ENCODE measurements at regions of chr9 and their contacts with region 1.

Region 1: GRCh38 chr9:90112788-90113187 is 508.0 kb downstream of the GADD45G start:
- DNase-seq: no peak
- H3K4me3 ChIP-seq: no peak overlapping the region
- CTCF ChIP-seq: no peak
- POLR2A ChIP-seq: no peak

Region 2: DNA sequence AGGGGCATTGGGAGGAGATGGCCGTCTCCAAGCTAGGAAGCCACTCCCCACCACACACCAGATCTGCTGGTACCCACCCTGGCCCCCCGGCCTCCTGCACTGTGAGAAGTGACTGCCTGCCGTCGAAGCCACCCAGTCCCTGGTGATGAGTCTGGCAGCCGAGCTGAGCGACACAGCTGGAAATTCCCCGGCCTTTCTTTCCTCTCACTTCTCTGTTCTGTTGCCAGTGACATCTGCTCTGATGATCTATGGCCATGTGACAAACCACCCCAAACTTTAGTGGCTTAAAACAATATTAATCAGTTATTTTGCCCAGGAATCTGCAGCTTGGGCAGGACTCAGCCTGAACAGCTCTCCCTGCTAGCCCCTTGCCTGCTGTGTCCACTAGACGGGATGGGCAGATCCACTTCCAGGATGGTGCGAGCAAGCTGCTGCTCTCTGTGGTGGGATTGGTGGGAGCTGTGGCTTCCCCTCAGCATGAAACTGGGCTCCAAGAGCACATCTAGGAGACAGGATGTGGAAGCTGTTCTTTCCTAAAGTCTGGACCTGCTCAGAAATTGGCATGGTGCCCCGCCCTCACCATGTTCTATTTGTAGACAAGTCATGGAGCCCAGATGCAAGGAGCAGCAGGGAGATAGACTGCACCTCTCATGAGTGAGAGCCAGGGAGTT is 296.8 kb before region 1 on chr9:
- intact Hi-C with region 1: loop called (anchors 10 kb)
- DNase-seq: peak in 1 of 2 donors; percentile 90
- H3K4me3 ChIP-seq: no peak overlapping the region
- CTCF ChIP-seq: no peak
- POLR2A ChIP-seq: no peak